ENCODE measurements at regions of chr5 and their contacts with region 1.

Region 1: DNA sequence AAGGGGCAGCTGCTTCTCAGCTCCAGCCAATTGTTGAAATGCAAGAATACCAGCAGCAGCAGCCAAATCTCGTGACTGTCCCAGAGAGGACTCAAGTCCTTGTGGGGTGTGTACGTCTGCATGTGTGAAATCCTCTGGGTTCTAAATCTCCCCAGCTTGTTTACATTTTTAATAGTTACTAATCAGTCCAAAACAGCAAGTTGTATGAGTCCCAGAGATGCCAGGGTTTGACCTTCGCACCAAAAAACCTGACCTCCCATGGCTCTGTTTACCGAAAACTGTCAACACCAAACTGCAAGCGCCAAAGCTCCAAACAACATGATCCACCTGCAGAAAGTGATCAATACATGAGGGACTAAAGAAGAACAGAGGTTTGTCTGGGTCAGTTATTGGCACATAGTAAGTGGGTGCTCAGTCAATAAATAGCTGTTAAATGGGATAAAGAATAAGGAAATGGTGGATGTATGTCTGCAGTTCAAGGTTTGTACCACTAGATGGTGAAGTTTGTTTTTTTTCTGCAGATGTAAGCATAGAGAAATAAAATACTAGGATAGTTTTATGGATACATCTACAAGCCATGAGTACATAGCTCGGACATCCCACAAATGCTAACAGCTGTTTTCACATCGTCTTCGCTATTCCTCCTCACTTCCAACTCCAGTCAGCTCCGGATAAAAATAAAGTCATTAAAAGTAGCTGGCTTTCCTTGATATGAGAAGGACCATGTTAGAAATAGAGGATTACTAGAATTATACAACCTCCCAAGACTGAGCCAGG is 85.3 kb upstream of the ADRB2 start:
- DNase-seq: peak; percentile 85
- ATAC-seq: peak; percentile 95
- H3K4me3 ChIP-seq: no peak overlapping the region
- H3K27ac ChIP-seq: no peak overlapping the region
- H3K4me1 ChIP-seq: no peaks in the 10 kb centered on the region
- H3K27me3 ChIP-seq: no peaks in the 10 kb centered on the region
- CTCF ChIP-seq: peak; percentile 85
- POLR2A ChIP-seq: no peak
- RAD21 ChIP-seq: peak; percentile 77

Region 2: GRCh38 chr5:148826053-148826738 is 85.0 kb after region 1 on chr5 and contains the start of gene ADRB2:
- CTCF ChIA-PET with region 1: interaction called, 10 read pairs
- POLR2A ChIA-PET with region 1: no interaction called
- dilution Hi-C with region 1: no loop called
- in situ Hi-C with region 1: no loop called
- intact Hi-C with region 1: loop called (anchors 5 kb)
- DNase-seq: peak; percentile 91
- ATAC-seq: peak; percentile 98
- H3K4me3 ChIP-seq: peak within 1 kb of the TSS; percentile 67
- H3K27ac ChIP-seq: peak within 1 kb of the TSS; percentile 70
- H3K4me1 ChIP-seq: peaks cover 13% of the 10 kb centered on the region
- H3K27me3 ChIP-seq: no peaks in the 10 kb centered on the region
- CTCF ChIP-seq: no peak
- POLR2A ChIP-seq: peak; percentile 94
- RAD21 ChIP-seq: no peak
- total RNA-seq, gene ADRB2: 3.4 and 4.4 TPM in 2 replicates

Region 3: DNA sequence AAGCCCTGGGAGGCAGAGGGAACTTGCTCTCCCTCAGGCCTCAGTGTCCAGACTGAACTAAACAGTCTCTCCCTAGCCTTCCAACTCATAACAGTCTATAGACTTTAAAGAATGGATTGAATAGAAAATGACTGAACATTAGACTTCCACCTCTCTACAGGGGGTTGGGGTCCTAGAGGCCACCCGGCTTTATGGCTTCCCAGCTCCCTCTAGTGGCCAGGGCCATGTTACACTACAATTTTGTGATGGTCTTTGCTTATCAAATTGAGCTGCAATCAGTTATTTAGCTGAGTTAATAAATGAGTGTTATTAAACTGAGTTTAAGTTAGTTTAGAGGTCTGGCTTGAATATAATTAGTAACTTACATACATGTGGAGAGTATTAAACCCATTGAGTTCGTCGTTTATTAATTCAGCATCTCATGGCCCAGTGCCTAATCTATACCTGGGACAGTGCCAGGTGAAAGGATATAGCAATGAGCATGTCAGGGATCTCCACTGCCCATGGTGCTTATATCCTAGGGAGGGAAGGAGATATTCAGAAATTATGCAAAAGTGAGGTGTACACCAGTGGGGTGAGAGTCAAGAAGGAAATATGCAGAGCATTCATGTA is 216.5 kb after region 1 on chr5:
- CTCF ChIA-PET with region 1: interaction called, 17 read pairs
- POLR2A ChIA-PET with region 1: no interaction called
- dilution Hi-C with region 1: no loop called
- in situ Hi-C with region 1: no loop called
- intact Hi-C with region 1: loop called (anchors 1 kb)
- DNase-seq: peak; percentile 43
- ATAC-seq: peak; percentile 73
- H3K4me3 ChIP-seq: no peak overlapping the region
- H3K27ac ChIP-seq: no peak overlapping the region
- H3K4me1 ChIP-seq: no peaks in the 10 kb centered on the region
- H3K27me3 ChIP-seq: no peaks in the 10 kb centered on the region
- CTCF ChIP-seq: peak; percentile 83
- POLR2A ChIP-seq: no peak
- RAD21 ChIP-seq: peak; percentile 86